Endothelial cell of umbilical vein (primary cell): ENCODE measurements at regions of chr10 and their contacts with region 1.

Region 1: DNA sequence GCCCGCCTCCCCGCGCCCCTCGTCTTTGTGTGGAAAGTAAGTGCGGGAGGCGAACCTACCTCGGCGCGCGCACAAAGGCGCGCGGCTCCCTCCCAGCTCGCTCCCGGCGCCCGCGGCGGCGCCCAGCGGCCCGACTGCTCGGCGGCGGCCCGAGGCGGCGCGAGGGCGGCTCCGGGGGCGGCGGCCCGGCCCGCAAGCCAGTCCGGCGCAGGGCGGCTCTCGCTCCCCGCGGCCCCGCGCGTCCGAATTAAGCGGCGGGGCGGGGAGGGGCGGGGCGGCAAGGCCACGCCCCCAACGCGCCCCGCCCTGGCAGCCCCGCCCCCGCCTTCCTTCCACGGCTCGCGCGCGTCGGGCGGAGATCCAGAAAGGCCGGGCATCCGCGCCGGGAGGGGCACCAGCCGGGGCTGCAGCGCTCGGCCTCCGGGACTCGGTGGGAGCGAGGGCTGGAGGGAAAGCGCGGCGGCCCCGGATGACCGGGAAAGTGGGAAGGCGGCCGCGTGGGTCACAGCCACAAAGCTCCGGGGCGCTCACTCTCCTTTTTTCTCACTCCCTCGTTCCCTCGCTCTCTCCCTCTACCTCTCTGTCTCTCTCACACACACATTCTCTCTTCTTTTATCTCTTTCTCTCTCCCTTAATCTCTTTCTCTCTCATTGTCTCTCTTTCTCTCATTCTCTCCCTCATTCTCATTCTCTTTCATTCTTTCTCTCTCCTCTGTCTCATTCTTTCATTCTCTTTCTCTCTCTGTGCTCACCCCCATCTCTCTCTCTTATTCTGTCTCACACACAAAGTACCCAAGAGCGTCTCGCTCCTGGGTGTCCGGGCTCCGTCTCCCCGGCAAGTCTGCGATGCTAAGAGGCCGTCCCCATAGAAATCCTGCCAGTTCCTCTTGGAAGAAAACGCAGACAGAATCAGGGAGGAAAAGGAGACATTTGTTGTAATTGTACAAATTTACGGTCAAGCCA is 170.2 kb downstream of the FAM107B start:
- DNase-seq: peak; percentile 71
- H3K4me3 ChIP-seq: peak overlapping the region; percentile 65 to 78 (median 76)
- H3K27ac ChIP-seq: peak overlapping the region; percentile 88
- H3K4me1 ChIP-seq: peaks cover 38% of the 10 kb centered on the region
- H3K27me3 ChIP-seq: no peaks in the 10 kb centered on the region
- CTCF ChIP-seq: no peak
- POLR2A ChIP-seq: peak; percentile 85

Region 2: DNA sequence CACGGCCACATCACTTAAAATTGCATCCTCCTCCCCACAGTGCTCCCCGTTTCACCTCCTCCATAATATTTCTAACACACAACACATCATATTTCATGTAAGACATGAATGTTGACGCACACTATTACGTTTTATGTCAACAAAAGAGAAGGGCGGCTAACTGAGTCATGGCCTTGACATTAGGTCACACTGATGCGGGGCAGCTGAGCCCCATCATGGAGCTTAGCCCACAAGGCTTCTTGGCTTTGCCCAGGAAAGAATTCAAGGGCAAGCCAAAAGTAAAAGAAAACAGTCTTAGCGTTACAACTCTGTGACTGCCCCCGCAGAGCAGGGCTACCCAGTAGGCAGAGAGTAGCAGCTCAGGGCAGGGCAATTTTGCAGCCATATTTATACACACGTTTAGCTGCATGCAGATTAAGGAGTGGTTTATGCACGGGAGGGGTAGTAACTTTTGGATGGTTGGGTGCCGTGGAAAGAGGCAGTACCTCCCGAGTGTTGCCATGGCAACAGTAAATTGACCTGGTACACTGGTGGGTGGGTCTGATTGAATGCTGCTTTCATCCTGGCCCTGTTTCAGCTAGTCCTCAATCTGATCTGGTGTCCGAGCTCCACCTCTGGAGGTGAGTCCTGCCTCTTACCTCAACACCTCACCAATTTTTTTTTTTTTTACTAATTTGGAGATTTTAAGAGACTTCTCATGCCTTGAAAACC is 117.5 kb before region 1 on chr10:
- CTCF ChIA-PET with region 1: no interaction called
- POLR2A ChIA-PET with region 1: no interaction called
- dilution Hi-C with region 1: no loop called
- intact Hi-C with region 1: no loop called
- DNase-seq: no peak
- H3K4me3 ChIP-seq: no peak overlapping the region
- H3K27ac ChIP-seq: no peak overlapping the region
- H3K4me1 ChIP-seq: peaks cover under 1% of the 10 kb centered on the region
- H3K27me3 ChIP-seq: peaks cover 8 to 29% of the 10 kb centered on the region in 2 experiments
- CTCF ChIP-seq: no peak
- POLR2A ChIP-seq: no peak

Region 3: DNA sequence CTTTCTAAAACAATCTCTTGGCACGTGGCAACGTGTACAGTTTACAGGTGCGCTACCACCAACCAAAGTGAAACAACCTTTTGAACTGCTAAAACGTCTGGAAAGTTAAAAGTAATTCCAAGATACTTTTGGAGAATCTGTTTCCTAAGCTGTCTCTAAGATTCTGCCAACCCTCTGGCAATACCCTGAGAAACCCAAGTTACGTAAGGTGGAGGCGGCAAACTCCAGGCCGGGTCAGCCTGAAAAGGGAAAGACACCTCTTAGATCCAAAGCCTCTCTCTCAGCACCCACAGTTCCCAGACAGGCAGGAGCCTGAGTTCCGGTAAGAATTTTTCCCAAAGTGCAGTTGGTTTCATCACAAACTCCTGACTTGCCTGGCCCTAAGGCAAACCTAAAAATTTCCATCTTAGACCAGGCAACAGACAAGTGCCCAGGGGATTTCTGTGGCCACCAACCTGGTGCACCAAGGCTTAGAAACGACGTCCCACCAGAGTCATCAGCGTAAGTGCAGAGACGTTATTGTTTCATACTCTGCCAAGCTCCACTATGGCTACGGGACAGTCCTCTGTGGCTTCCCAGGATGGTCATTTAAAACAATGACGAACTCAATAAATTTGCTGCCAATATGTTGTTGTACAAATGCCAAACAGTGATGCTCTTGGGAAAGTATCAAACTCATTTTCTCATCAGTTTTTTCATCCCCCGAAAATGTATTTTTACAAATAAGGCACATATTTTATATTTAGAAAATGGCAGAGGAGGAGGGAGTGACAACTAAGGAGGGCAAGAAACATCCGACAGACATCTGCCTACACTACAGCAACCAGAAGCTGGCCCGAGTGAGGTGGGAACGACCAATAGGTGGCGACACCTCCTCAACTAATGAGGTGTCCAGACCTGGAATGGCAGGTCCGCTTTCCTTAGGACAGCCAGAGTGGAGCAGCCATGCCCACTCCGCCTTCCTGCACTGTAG is 67.9 kb before region 1 on chr10:
- CTCF ChIA-PET with region 1: no interaction called
- POLR2A ChIA-PET with region 1: no interaction called
- dilution Hi-C with region 1: no loop called
- intact Hi-C with region 1: loop called (anchors 2 kb)
- DNase-seq: peak; percentile 65
- H3K4me3 ChIP-seq: no peak overlapping the region
- H3K27ac ChIP-seq: no peak overlapping the region
- H3K4me1 ChIP-seq: no peaks in the 10 kb centered on the region
- H3K27me3 ChIP-seq: no peaks in the 10 kb centered on the region
- CTCF ChIP-seq: peak; percentile 55 to 59
- POLR2A ChIP-seq: no peak

Region 4: GRCh38 chr10:14578060-14578952 is 26.2 kb before region 1 on chr10:
- CTCF ChIA-PET with region 1: no interaction called
- POLR2A ChIA-PET with region 1: interaction called, 4 read pairs
- dilution Hi-C with region 1: no loop called
- intact Hi-C with region 1: loop called (anchors 1 kb)
- DNase-seq: peak; percentile 100
- H3K4me3 ChIP-seq: peak overlapping the region in 1 of 3 experiments; percentile 42
- H3K27ac ChIP-seq: peak overlapping the region; percentile 97
- H3K4me1 ChIP-seq: peaks cover 78% of the 10 kb centered on the region
- H3K27me3 ChIP-seq: no peaks in the 10 kb centered on the region
- CTCF ChIP-seq: no peak
- POLR2A ChIP-seq: peak; percentile 82

Region 5: DNA sequence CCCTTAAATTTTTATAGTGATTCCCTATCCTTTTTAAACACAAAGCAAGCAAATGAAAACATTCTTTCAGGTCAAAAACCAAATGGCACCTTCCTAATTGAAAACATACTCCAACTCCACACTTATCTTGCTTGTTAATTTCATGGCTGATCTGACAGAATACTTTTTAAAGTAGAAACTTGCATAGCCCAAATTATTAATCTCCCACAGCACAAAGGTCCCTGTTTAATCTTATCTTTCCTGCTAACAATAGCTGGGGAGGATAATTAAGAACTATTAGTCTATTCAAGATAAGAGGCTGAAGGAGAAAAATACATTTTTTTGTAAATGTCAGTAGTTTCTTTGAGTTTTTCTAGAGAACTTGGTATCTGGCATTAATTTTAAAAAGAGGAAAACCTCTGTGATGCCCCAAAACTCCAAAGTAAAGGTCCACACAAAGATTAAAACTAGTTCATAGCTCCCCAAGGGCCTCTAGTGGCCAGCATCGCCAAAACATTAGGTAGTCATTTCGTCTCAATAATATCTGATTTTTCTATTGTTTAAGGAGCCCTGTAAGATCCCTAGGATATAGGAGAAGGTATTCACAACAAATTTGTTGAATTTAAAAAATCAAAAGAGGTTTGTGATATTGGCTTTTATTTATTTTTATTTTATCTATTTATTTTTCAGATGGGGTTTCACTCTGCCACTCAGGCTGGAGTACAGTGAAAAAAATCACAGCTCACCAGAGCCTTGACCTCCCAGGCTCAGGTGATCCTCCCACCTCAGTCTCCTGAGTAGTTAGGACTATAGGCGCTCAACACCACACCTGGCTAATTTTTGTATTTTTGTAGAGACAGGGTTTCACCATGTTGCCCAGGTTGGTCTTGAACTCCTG is 218.7 kb after region 1 on chr10:
- CTCF ChIA-PET with region 1: interaction called, 12 read pairs
- POLR2A ChIA-PET with region 1: no interaction called
- dilution Hi-C with region 1: no loop called
- intact Hi-C with region 1: loop called (anchors 1 kb)
- DNase-seq: peak; percentile 70
- H3K4me3 ChIP-seq: no peak overlapping the region
- H3K27ac ChIP-seq: no peak overlapping the region
- H3K4me1 ChIP-seq: peaks cover 20% of the 10 kb centered on the region
- H3K27me3 ChIP-seq: peaks cover 0 to 3% of the 10 kb centered on the region in 2 experiments
- CTCF ChIP-seq: peak; percentile 59 to 66
- POLR2A ChIP-seq: no peak

Region 6: DNA sequence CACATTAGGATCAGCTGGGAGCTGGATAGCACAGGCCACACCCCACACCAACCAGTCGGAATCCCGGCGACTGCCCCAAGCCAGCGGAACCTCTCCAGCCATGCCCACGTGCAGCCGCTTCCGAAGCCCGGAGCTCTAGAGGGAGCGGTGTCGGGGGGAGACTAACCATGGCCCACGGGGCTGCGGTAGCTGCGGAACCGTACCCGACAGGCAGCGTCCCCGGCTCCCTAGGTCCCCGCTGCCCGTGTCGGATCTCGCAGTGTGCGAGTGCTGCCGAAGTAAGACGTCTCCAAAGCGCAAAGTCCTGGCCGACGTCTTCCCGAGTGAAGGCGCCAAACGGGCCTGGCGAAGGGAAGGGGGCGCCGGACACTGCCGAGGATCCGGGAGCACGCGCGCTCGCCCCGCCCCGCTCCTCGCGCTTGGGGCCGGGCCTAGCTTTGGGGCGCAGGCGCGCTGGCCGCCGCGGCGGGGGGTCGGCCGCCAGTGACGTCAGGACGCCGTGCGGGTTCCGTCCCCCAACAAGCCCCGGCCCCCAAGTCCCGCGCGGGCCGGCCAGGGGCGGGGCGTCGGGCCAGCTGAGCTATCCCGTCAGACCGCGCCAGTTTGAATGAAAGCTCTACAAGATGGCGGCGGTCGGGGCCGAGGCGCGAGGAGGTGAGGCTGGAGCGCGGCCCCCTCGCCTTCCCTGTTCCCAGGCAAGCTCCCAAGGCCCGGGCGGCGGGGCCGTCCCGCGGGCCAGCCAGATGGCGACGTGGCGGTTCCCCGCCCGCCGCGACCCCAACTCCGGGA is 274.0 kb after region 1 on chr10 and contains the start of gene SUV39H2:
- CTCF ChIA-PET with region 1: no interaction called
- POLR2A ChIA-PET with region 1: no interaction called
- dilution Hi-C with region 1: no loop called
- intact Hi-C with region 1: loop called (anchors 1 kb)
- DNase-seq: peak; percentile 98
- H3K4me3 ChIP-seq: peak within 1 kb of the TSS; percentile 88 to 97 (median 90)
- H3K27ac ChIP-seq: peak within 1 kb of the TSS; percentile 69
- H3K4me1 ChIP-seq: peaks cover 20% of the 10 kb centered on the region
- H3K27me3 ChIP-seq: no peaks in the 10 kb centered on the region
- CTCF ChIP-seq: no peak
- POLR2A ChIP-seq: peak; percentile 88
- total RNA-seq, gene SUV39H2: 25.8 and 29.9 TPM in 2 replicates